ENCODE measurements at regions of chr21 and their contacts with region 1.

Region 1: DNA sequence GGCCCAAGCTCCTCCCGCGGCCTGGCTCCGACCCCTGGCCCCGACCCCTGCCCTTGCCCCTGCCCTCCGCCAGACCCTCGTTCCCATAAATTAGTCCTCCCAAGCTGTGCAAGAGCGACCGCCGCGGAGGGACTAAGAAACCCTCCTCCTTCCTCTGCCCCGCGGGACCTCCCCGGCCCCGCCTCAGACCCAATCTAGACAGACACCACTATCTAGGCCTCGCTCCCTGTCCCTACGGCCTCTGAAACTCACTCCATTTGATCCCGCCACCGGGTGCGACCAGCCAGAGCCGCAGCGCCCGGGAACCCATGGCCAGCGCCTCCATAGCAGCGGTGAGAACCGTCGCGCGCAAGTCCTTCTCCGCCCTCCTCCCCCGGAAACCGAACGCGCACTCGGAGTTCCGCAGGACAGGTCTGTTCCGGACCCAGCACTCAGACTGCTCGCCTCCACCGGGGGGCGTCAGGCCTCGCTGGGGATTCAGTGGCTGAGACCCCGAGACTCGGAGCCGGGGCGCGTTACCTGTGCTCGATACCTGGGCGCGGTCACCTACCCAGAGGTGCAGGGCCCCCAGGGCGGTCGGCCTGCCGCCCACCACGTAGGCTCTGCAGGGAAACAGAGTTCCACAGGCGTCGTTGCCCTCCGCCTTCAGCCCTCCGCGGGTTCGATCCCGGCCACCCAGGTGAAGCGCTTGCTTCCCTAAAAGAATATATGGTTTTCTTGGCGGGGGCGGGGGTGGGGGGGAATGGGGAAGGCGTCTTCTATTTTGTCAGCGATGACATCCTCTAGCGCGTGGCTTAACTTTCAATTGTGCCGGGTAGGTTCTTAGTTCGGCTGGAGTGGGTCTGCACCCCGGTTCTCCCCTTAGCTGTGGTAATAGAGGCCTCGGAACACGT is at the start of gene MRPL39:
- DNase-seq: peak; percentile 75 to 76
- H3K4me3 ChIP-seq: peak within 1 kb of the TSS; percentile 83
- H3K27ac ChIP-seq: 0 out of 2 replicates have a peak within 1 kb of the TSS, but pooled peaks have one; percentile 44
- H3K4me1 ChIP-seq: no peaks in the 10 kb centered on the region
- H3K27me3 ChIP-seq: no peaks in the 10 kb centered on the region
- CTCF ChIP-seq: peak; percentile 50; the same call in 1 of the 2 replicates
- total RNA-seq, gene MRPL39: 15.5 and 21.2 TPM in 2 replicates

Region 2: GRCh38 chr21:25708467-25709065 is 101.2 kb after region 1 on chr21:
- CTCF ChIA-PET with region 1: no interaction called
- POLR2A ChIA-PET with region 1: no interaction called
- intact Hi-C with region 1: loop called (anchors 1 kb)
- DNase-seq: no peak
- H3K4me3 ChIP-seq: no peak overlapping the region
- H3K27ac ChIP-seq: no peak overlapping the region
- H3K4me1 ChIP-seq: no peaks in the 10 kb centered on the region
- H3K27me3 ChIP-seq: no peaks in the 10 kb centered on the region
- CTCF ChIP-seq: peak; percentile 87

Region 3: DNA sequence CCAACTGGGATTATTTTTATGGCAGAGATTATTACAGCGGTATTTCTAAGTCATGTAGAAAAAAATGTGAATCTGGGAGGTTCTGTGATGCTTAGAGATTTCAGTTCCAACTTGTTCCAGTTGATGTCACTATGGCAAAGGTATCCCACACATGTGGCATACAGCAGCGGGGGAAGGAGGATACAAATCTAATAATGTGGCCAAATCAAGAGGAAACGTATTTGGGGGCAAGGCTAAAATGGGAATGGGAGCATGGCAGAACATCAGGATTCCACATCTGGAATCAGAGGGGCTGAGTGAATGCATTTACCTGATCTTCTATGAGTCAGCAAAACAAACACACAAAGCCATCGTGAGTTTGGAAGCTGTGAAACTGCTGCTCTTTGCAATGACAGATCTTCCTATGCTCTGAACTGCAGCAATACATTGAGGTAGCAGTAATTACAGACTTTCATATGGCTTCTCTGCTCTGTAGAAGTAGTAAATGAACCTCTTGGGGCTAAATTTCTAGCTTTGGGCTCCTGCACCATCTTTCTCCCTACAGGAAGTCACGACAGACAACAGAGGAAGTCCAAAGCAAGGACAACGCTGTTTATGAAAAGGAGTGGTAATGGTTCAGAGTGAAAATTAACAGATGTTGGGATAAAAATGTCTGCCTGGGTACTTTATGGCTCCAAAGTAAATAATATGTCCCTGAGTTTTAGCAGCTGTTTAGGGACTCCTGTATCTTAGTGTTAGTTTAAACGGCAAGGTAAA is 182.9 kb after region 1 on chr21:
- CTCF ChIA-PET with region 1: no interaction called
- POLR2A ChIA-PET with region 1: no interaction called
- intact Hi-C with region 1: loop called (anchors 10 kb)
- DNase-seq: peak in 1 of 2 experiments; percentile 3
- H3K4me3 ChIP-seq: no peak overlapping the region
- H3K27ac ChIP-seq: no peak overlapping the region
- H3K4me1 ChIP-seq: no peaks in the 10 kb centered on the region
- H3K27me3 ChIP-seq: no peaks in the 10 kb centered on the region
- CTCF ChIP-seq: peak; percentile 37; the same call in 1 of the 2 replicates

Region 4: GRCh38 chr21:26170471-26171257 is 563.3 kb after region 1 on chr21 and contains the start of gene APP:
- CTCF ChIA-PET with region 1: no interaction called
- POLR2A ChIA-PET with region 1: no interaction called
- intact Hi-C with region 1: loop called (anchors 2 kb)
- DNase-seq: peak; percentile 51 to 84
- H3K4me3 ChIP-seq: peak within 1 kb of the TSS; percentile 92
- H3K27ac ChIP-seq: peak within 1 kb of the TSS; percentile 43
- H3K4me1 ChIP-seq: peaks cover 33% of the 10 kb centered on the region
- H3K27me3 ChIP-seq: no peaks in the 10 kb centered on the region
- CTCF ChIP-seq: peak; percentile 63; the same call in 1 of the 2 replicates
- total RNA-seq, gene APP: 224 and 269 TPM in 2 replicates

Region 5: GRCh38 chr21:26842976-26843932 is 1235.9 kb after region 1 on chr21:
- CTCF ChIA-PET with region 1: no interaction called
- POLR2A ChIA-PET with region 1: no interaction called
- intact Hi-C with region 1: loop called (anchors 2 kb)
- DNase-seq: peak in 1 of 2 experiments; percentile 58
- H3K4me3 ChIP-seq: no peak overlapping the region
- H3K27ac ChIP-seq: no peak overlapping the region
- H3K4me1 ChIP-seq: 0 out of 2 replicates have a peak, but pooled peaks cover 3% of the 10 kb centered on the region
- H3K27me3 ChIP-seq: no peaks in the 10 kb centered on the region
- CTCF ChIP-seq: no peak